Lower leg skin (tissue), 4 donors: ENCODE measurements at regions of chr22 and their contacts with region 1.

Region 1: GRCh38 chr22:28600546-28601143 is 79.0 kb downstream of the TTC28 start:
- DNase-seq: no peak
- H3K4me3 ChIP-seq: no peak overlapping the region
- CTCF ChIP-seq: no peak
- POLR2A ChIP-seq: no peak

Region 2: GRCh38 chr22:28829358-28830181 is 228.9 kb after region 1 on chr22:
- intact Hi-C with region 1: loop called (anchors 5 kb)
- DNase-seq: peak; percentile 76 to 94
- H3K4me3 ChIP-seq: no peak overlapping the region
- CTCF ChIP-seq: peak in 1 of 3 donors; percentile 97
- POLR2A ChIP-seq: no peak

Region 3: GRCh38 chr22:29096736-29097669 is 496.4 kb after region 1 on chr22:
- intact Hi-C with region 1: no loop called
- DNase-seq: no peak
- H3K4me3 ChIP-seq: no peak overlapping the region
- CTCF ChIP-seq: no peak
- POLR2A ChIP-seq: no peak